ENCODE measurements at regions of chr17 and their contacts with region 1.

Region 1: GRCh38 chr17:44522883-44523671 is 19.9 kb upstream of the GPATCH8 start:
- DNase-seq: peak in 1 of 2 experiments; percentile 94
- H3K4me3 ChIP-seq: no peak overlapping the region
- H3K27ac ChIP-seq: no peak overlapping the region
- H3K4me1 ChIP-seq: no peaks in the 10 kb centered on the region
- H3K27me3 ChIP-seq: no peaks in the 10 kb centered on the region
- CTCF ChIP-seq: peak; percentile 81 to 87 (median 83)
- EP300 ChIP-seq: no peak
- POLR2A ChIP-seq: no peak
- RAD21 ChIP-seq: peak; percentile 90 to 92

Region 2: GRCh38 chr17:44400226-44400847 is 122.7 kb before region 1 on chr17:
- CTCF ChIA-PET with region 1: interaction called, 29 read pairs
- POLR2A ChIA-PET with region 1: no interaction called
- DNase-seq: peak in 1 of 2 experiments; percentile 43
- H3K4me3 ChIP-seq: no peak overlapping the region
- H3K27ac ChIP-seq: no peak overlapping the region
- H3K4me1 ChIP-seq: no peaks in the 10 kb centered on the region
- H3K27me3 ChIP-seq: no peaks in the 10 kb centered on the region
- CTCF ChIP-seq: peak in 2 of 3 experiments; percentile 53 to 61; a peak in 3 of 4 replicates
- EP300 ChIP-seq: no peak
- POLR2A ChIP-seq: no peak
- RAD21 ChIP-seq: peak; percentile 54 to 62

Region 3: GRCh38 chr17:44503147-44504029 is 19.7 kb before region 1 on chr17 and contains the start of gene GPATCH8:
- CTCF ChIA-PET with region 1: interaction called, 5 read pairs
- POLR2A ChIA-PET with region 1: interaction called, 10 read pairs
- DNase-seq: peak; percentile 88 to 97
- H3K4me3 ChIP-seq: peak within 1 kb of the TSS; percentile 82 to 97 (median 86)
- H3K27ac ChIP-seq: peak within 1 kb of the TSS; percentile 96
- H3K4me1 ChIP-seq: peaks cover 2 to 3% (median 2%) of the 10 kb centered on the region in 4 experiments; a peak in 4 of 7 replicates
- H3K27me3 ChIP-seq: 0 out of 7 replicates have a peak, but pooled peaks cover 0 to 2% (median 0%) of the 10 kb centered on the region in 4 experiments
- CTCF ChIP-seq: no peak
- EP300 ChIP-seq: no peak
- POLR2A ChIP-seq: peak; percentile 78 to 97
- RAD21 ChIP-seq: no peak
- total RNA-seq, gene GPATCH8: 51.5 and 58.1 TPM in 2 replicates